ENCODE measurements at regions of chr9 and their contacts with region 1.

Region 1: GRCh38 chr9:135315572-135315971 is 164.0 kb upstream of the PPP1R26 start:
- DNase-seq: no peak
- H3K4me3 ChIP-seq: no peak overlapping the region
- H3K27ac ChIP-seq: no peak overlapping the region
- H3K4me1 ChIP-seq: no peaks in the 10 kb centered on the region
- H3K27me3 ChIP-seq: no peaks in the 10 kb centered on the region
- CTCF ChIP-seq: no peak
- EP300 ChIP-seq: no peak
- POLR2A ChIP-seq: no peak

Region 2: DNA sequence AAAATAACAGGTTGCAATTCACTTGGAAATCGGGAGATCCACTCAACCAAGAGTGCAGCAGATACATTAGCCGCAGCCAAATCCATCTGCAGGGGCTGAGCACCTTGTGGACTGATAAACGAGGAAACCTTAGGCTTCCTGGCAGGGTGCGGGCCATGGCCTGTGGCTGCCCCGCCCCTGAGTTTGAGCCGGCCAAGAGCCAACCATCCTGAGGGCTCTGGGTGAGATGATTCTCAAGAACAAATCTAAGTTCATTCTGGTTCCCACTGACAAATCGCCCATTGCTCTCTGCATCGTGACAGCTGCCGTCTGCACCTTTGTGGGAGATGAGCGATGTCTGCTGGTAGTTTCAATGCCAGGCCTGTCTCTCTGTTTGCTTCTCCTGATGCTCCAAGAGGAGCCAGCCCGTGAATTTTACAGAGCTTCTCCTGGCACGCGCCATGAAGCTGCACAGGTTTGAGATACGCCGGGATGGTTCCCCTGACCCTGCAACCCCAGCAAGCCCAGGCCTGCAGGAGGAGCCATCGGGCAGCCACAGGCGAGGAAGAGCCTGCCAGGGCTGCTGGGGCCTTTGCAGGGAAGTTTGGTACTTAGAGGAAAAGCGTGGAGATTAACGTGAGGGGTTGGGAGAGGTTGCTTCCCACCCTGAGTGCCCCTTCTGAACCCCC is 74.1 kb before region 1 on chr9:
- intact Hi-C with region 1: loop called in 1 of 4 experiments (anchors 5 kb)
- DNase-seq: no peak
- H3K4me3 ChIP-seq: no peak overlapping the region
- H3K27ac ChIP-seq: no peak overlapping the region
- H3K4me1 ChIP-seq: no peaks in the 10 kb centered on the region
- H3K27me3 ChIP-seq: no peaks in the 10 kb centered on the region
- CTCF ChIP-seq: no peak
- EP300 ChIP-seq: no peak
- POLR2A ChIP-seq: no peak